ENCODE measurements at regions of chr2 and their contacts with region 1.

Region 1: GRCh38 chr2:208783187-208783586 is 376.6 kb downstream of the PTH2R start:
- DNase-seq: peak; percentile 7
- ATAC-seq: peak; percentile 54; the same call in 1 of the 2 replicates
- H3K4me3 ChIP-seq: no peak overlapping the region
- H3K27ac ChIP-seq: no peak overlapping the region
- H3K4me1 ChIP-seq: no peaks in the 10 kb centered on the region
- H3K27me3 ChIP-seq: no peaks in the 10 kb centered on the region
- CTCF ChIP-seq: peak; percentile 32 to 45 (median 35); a peak in 3 of 6 replicates
- POLR2A ChIP-seq: no peak
- RAD21 ChIP-seq: peak; percentile 52

Region 2: GRCh38 chr2:208466151-208466919 is 316.9 kb before region 1 on chr2:
- CTCF ChIA-PET with region 1: interaction called, 5 read pairs
- POLR2A ChIA-PET with region 1: no interaction called
- RAD21 ChIA-PET with region 1: no interaction called
- intact Hi-C with region 1: loop called (anchors 1 kb)
- DNase-seq: peak; percentile 44
- ATAC-seq: peak; percentile 90
- H3K4me3 ChIP-seq: no peak overlapping the region
- H3K27ac ChIP-seq: no peak overlapping the region
- H3K4me1 ChIP-seq: no peaks in the 10 kb centered on the region
- H3K27me3 ChIP-seq: no peaks in the 10 kb centered on the region
- CTCF ChIP-seq: peak; percentile 58 to 79 (median 74)
- POLR2A ChIP-seq: no peak
- RAD21 ChIP-seq: peak; percentile 83